CD4-positive, alpha-beta T cell (primary cell): ENCODE measurements at regions of chr19 and their contacts with region 1.

Region 1: DNA sequence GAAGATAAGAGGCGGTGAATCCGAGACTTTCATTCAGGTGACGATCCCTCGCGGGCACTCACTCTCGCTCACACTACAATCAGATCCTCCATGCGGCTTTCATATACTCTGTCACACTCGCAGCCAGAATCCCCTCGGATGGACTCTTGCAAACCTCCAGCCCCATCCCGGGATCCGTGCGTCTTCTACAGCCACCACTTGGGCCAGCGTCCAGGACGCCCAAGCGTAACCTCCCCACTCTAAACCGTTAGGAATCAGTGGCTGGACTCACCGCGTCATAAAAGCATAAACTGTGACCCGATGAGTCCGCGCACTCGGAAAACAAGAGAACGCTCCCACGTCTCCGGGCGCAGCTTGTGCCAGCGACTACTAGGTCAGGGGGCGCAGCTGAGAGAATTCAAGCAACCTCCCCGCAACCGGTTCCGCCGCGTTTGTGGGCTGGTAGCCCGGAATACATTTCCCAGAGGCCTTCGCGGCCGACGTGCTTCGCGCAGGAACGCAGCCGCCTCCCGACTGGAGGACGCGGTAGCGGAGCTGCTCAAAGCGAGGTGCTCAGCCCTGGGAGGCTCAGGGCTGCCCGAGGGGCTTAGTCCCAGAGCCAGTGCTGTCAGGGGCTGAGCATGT is 27.6 kb downstream of the ZNF607 start:
- DNase-seq: peak; percentile 61 to 90 (median 76)
- ATAC-seq: peak; percentile 95
- H3K4me3 ChIP-seq: peak overlapping the region; percentile 67
- H3K4me3 Mint-ChIP-seq: peak overlapping the region; percentile 96
- H3K27ac ChIP-seq: peak overlapping the region in 1 of 2 donors; percentile 32
- H3K27ac Mint-ChIP-seq: peak overlapping the region; percentile 89
- H3K4me1 ChIP-seq: peaks cover 11% of the 10 kb centered on the region
- H3K4me1 Mint-ChIP-seq: peaks cover 12% of the 10 kb centered on the region
- H3K27me3 ChIP-seq: no peaks in the 10 kb centered on the region
- H3K27me3 Mint-ChIP-seq: no peaks in the 10 kb centered on the region
- CTCF ChIP-seq: no peak

Region 2: DNA sequence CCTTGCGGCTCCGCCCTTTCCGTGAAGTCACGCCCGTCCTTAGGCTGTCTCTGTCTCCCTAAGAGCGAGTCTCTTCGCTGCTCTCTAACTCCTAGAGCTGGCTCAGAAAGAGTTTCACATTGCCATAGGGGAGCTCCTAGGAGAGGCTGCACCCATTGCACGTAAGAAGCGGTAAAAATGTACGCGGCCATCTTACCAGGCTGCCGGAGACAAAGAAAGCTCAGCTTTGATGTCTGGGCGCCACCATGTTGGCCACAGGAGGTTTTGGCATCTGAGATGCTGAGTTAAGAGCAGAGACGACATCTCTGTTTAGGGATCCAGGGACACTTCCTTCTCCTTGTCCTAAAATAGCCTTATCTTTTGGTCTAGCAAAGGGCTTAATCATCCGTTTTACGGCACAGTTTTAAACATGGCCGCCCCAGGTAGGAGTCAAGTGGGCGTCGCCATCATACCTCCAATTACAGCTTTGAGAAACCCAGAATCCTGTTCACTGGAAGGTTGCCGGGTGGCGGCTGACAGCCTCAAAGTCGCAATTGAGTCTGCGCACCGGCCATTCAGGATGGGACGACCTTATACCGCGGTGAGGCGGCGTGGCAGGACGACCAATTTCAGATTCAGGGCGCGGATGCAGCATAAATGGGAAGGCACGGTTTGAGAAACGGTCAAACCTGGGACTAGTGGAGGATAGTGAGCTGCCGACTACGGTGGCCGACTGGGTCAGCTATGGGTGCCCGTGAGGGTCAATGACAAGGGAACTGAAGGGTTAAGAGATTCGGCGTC is 185.4 kb before region 1 on chr19 and contains the start of gene ZNF793:
- CTCF ChIA-PET with region 1: no interaction called
- POLR2A ChIA-PET with region 1: interaction called, 11 read pairs
- intact Hi-C with region 1: no loop called
- DNase-seq: peak; percentile 68 to 92 (median 78)
- ATAC-seq: peak; percentile 85
- H3K4me3 ChIP-seq: peak within 1 kb of the TSS; percentile 68
- H3K4me3 Mint-ChIP-seq: no peak within 1 kb of the TSS
- H3K27ac ChIP-seq: peak within 1 kb of the TSS; percentile 88 to 92
- H3K27ac Mint-ChIP-seq: no peak within 1 kb of the TSS
- H3K4me1 ChIP-seq: peaks cover 20% of the 10 kb centered on the region
- H3K4me1 Mint-ChIP-seq: no peaks in the 10 kb centered on the region
- H3K27me3 ChIP-seq: no peaks in the 10 kb centered on the region
- H3K27me3 Mint-ChIP-seq: no peaks in the 10 kb centered on the region
- CTCF ChIP-seq: no peak
- total RNA-seq, gene ZNF793: 2.3 TPM

Region 3: DNA sequence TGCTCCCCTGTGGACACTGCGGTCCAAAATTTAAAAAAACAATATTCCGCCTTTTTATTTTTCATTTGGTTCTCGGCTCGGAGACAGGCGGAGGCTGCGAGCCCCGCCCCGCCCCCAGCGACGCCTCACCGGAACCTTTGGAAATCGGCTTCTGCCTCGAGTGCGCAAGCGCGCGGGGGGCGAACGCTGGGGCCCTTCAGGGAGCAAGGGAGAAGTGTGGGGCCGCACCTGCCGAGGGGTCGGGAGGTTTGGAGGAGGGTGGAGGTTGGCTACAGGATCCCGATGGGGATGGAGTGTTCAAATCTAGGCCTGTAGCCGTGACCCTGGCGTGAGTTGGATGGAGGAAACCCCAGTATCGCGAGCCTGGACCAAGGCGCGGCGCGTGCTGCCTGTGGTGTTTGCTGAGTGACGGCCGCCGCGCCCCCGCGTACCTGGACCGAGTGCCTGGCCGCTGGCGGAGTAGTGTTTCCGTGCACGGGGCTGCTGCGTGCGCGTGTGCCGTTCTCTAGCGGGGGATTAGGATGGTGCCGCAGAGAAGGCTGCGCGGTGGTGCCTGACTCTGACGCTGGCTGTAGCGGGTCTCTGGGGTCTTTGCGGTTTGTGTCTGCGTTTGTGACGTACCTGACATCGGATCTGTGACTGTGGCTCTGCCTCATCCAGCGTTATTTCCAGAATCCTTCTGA is 36.2 kb before region 1 on chr19:
- CTCF ChIA-PET with region 1: interaction called, 4 read pairs
- POLR2A ChIA-PET with region 1: interaction called, 4 read pairs
- intact Hi-C with region 1: loop called in 1 of 2 experiments (anchors 1 kb)
- DNase-seq: peak; percentile 57 to 91 (median 80)
- ATAC-seq: peak; percentile 77
- H3K4me3 ChIP-seq: peak overlapping the region; percentile 82
- H3K4me3 Mint-ChIP-seq: peak overlapping the region; percentile 99
- H3K27ac ChIP-seq: peak overlapping the region; percentile 83 to 91
- H3K27ac Mint-ChIP-seq: peak overlapping the region; percentile 98
- H3K4me1 ChIP-seq: peaks cover 14% of the 10 kb centered on the region
- H3K4me1 Mint-ChIP-seq: peaks cover 41% of the 10 kb centered on the region
- H3K27me3 ChIP-seq: no peaks in the 10 kb centered on the region
- H3K27me3 Mint-ChIP-seq: no peaks in the 10 kb centered on the region
- CTCF ChIP-seq: no peak

Region 4: DNA sequence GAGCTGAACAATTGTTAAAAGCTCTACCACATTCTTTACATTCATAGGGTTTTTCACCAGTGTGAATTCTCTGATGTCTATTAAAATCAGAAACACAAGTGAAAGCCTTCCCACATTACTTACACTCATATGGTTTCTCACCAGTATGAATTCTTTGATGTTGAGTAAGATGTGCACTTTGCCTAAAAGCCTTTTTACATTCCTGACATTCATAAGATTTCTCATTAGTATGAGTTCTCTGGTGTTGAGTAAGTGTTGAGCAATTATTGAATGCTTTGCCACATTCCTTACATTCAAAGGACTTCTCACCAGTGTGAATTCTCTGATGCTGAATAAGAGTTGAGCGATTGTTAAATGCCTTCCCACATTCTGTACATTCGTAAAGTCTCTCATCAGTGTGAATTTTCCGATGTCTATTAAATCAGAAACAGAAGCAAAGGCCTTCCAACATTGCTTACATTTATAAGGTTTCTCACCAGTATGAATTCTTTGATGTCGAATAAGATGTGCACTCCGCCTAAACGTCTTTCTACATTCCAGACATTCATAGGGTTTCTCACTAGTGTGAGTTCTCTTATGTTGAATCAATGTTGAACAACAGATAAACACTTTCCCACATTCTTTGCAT is 22.5 kb before region 1 on chr19:
- CTCF ChIA-PET with region 1: no interaction called
- POLR2A ChIA-PET with region 1: no interaction called
- intact Hi-C with region 1: no loop called
- DNase-seq: no peak
- ATAC-seq: no peak
- H3K4me3 ChIP-seq: no peak overlapping the region
- H3K4me3 Mint-ChIP-seq: no peak overlapping the region
- H3K27ac ChIP-seq: no peak overlapping the region
- H3K27ac Mint-ChIP-seq: no peak overlapping the region
- H3K4me1 ChIP-seq: no peaks in the 10 kb centered on the region
- H3K4me1 Mint-ChIP-seq: no peaks in the 10 kb centered on the region
- H3K27me3 ChIP-seq: no peaks in the 10 kb centered on the region
- H3K27me3 Mint-ChIP-seq: no peaks in the 10 kb centered on the region
- CTCF ChIP-seq: no peak

Region 5: GRCh38 chr19:37719111-37719926 is 27.3 kb after region 1 on chr19 and contains the start of gene ZNF607:
- CTCF ChIA-PET with region 1: no interaction called
- POLR2A ChIA-PET with region 1: no interaction called
- intact Hi-C with region 1: loop called in 1 of 2 experiments (anchors 1 kb)
- DNase-seq: peak; percentile 55 to 92 (median 74)
- ATAC-seq: peak; percentile 75
- H3K4me3 ChIP-seq: peak within 1 kb of the TSS; percentile 87
- H3K4me3 Mint-ChIP-seq: peak within 1 kb of the TSS; percentile 91
- H3K27ac ChIP-seq: peak within 1 kb of the TSS; percentile 48 to 55
- H3K27ac Mint-ChIP-seq: peak within 1 kb of the TSS; percentile 79
- H3K4me1 ChIP-seq: peaks cover 15% of the 10 kb centered on the region
- H3K4me1 Mint-ChIP-seq: peaks cover 18% of the 10 kb centered on the region
- H3K27me3 ChIP-seq: no peaks in the 10 kb centered on the region
- H3K27me3 Mint-ChIP-seq: no peaks in the 10 kb centered on the region
- CTCF ChIP-seq: no peak
- total RNA-seq, gene ZNF607: 2.2 to 2.3 TPM